ENCODE measurements at regions of chr7 and their contacts with region 1.

Region 1: DNA sequence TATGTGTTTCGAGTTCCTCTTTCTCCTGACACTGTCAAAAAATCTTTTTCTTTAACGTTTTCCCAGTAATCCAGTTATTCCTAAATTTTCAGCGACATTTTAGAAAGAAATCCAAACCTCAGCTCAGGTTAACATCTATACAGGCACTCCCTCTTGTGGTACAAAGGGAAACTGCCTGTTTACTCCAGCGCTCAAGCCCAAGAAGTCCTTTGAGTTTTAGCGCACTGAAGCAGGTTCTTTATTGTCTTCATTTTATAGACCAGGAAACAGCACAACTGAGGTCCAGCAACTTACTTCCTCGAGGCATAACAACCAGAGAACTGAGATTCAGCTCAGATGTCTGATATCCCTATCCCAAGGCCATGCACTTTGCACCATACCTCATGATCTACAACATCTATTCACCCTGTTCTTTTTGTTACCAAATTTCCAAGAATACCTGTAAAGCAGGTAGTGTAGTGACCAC is 287.2 kb upstream of the MKLN1 start:
- H3K4me3 ChIP-seq: no peak overlapping the region
- H3K27ac ChIP-seq: no peak overlapping the region
- H3K4me1 ChIP-seq: peaks cover 3% of the 10 kb centered on the region; the same call in 1 of the 2 replicates
- CTCF ChIP-seq: peak; percentile 71; the same call in 1 of the 2 replicates

Region 2: DNA sequence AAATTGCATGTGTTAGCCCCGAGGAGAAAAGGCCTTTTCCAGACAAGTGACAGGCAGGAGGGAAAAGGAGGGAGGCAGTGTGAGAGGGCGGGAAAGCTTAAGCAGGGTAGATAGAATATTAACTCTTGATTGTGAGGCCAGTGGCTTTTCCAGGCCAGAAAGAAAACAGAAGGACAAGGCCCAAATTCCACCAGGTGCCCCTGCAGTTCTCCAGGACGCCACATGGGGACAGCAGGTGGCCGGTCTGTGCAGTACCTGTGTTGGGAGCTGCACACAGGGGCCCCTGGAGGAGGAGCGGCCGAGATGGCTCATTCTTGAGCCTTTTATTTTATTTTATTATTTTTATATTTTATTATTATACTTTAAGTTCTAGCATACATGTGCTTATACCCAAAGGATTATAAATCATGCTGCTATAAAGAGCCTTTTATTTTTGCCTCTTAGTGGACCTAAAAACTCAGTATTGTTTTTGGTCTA is 165.2 kb before region 1 on chr7:
- CTCF ChIA-PET with region 1: interaction called, 32 read pairs
- POLR2A ChIA-PET with region 1: no interaction called
- H3K4me3 ChIP-seq: no peak overlapping the region
- H3K27ac ChIP-seq: no peak overlapping the region
- H3K4me1 ChIP-seq: peaks cover 4% of the 10 kb centered on the region
- CTCF ChIP-seq: peak; percentile 70

Region 3: GRCh38 chr7:131007394-131008330 is 32.8 kb before region 1 on chr7:
- CTCF ChIA-PET with region 1: interaction called, 10 read pairs
- POLR2A ChIA-PET with region 1: no interaction called
- H3K4me3 ChIP-seq: no peak overlapping the region
- H3K27ac ChIP-seq: no peak overlapping the region
- H3K4me1 ChIP-seq: peaks cover 12% of the 10 kb centered on the region
- CTCF ChIP-seq: peak; percentile 82

Region 4: DNA sequence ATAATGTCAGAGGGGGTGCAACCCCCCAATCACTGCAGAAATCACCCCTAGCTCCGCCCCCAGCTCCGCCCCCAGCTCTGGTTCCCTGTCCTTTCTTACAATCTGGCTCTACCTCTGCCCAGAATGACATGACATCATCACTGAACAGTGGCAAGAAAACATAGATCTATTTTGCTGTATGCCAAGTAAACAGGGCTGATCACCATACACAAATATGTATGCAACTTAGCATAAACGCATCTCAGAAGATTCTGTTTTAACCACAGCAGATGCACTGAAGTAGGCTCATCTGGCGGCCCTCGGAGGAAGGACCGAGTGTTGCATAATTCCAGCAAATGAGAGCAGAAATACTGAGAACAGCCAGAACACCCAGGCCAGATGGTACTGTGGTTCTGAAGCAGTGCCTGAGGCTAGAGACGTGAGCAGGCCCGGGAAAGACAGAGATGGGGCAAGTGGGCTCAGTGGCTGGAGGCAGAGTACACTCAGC is 13.2 kb before region 1 on chr7:
- CTCF ChIA-PET with region 1: interaction called, 10 read pairs
- POLR2A ChIA-PET with region 1: no interaction called
- H3K4me3 ChIP-seq: no peak overlapping the region
- H3K27ac ChIP-seq: no peak overlapping the region
- H3K4me1 ChIP-seq: no peaks in the 10 kb centered on the region
- CTCF ChIP-seq: no peak

Region 5: GRCh38 chr7:131057015-131057793 is 16.7 kb after region 1 on chr7:
- CTCF ChIA-PET with region 1: interaction called, 14 read pairs
- POLR2A ChIA-PET with region 1: no interaction called
- H3K4me3 ChIP-seq: no peak overlapping the region
- H3K27ac ChIP-seq: no peak overlapping the region
- H3K4me1 ChIP-seq: no peaks in the 10 kb centered on the region
- CTCF ChIP-seq: no peak

Measured in HEK293 (cell line).